CD14-positive monocyte (primary cell): ENCODE measurements at regions of chr9 and their contacts with region 1.

Region 1: DNA sequence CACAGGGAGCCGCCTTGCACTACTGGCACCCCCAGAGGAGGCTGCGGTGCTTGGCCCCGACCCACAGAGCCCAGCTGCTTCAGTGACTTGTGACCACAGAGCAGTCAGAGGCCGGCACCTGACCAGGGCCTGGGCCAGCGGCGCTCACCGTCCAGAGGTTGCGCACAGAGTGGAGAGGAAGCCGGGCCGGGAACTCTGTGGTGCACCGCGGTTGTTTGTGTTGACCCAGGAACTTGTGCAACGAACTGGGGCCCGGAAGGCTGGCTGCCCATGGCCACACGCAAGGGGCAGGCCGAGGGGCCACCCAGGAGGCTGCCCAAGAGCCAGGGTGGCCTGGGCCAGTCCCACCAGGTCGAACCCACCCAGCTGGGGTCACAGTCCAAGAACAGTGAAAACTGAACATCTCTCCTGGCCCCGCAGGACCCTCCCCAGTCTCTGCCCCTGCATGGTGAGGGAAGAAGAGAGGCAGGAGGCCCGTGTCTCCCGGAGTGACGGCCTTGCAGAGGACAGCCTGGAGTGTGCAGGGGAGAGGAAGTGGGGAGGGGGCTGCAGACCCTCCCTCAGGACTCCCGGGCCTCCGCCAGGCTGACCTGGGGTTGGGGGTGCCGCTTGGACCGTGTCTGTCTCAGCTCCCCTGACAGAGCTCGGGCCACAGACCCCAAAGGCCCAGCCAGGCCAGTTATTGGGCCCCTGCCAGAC is 42.8 kb upstream of the EGFL7 start:
- DNase-seq: peak; percentile 96 to 98 (median 96)
- H3K4me3 ChIP-seq: peak overlapping the region in 1 of 3 experiments; percentile 53
- H3K4me3 Mint-ChIP-seq: peak overlapping the region; percentile 58 to 67
- H3K27ac ChIP-seq: peak overlapping the region; percentile 97 to 99
- H3K27ac Mint-ChIP-seq: peak overlapping the region; percentile 88 to 96 (median 92)
- H3K4me1 ChIP-seq: peaks cover 73 to 85% of the 10 kb centered on the region in 2 donors
- H3K4me1 Mint-ChIP-seq: peaks cover 50% of the 10 kb centered on the region
- H3K27me3 ChIP-seq: peaks cover 0 to 2% of the 10 kb centered on the region in 2 donors
- H3K27me3 Mint-ChIP-seq: peaks cover 4 to 17% (median 6%) of the 10 kb centered on the region in 3 donors
- CTCF ChIP-seq: no peak

Region 2: GRCh38 chr9:136545966-136546698 is 73.8 kb before region 1 on chr9 and contains the start of gene NOTCH1:
- intact Hi-C with region 1: loop called in 1 of 2 experiments (anchors 5 kb)
- DNase-seq: peak; percentile 95 to 98 (median 97)
- H3K4me3 ChIP-seq: peak within 1 kb of the TSS; percentile 87 to 99 (median 93)
- H3K4me3 Mint-ChIP-seq: peak within 1 kb of the TSS; percentile 89 to 94
- H3K27ac ChIP-seq: peak within 1 kb of the TSS; percentile 84 to 92
- H3K27ac Mint-ChIP-seq: peak within 1 kb of the TSS; percentile 82 to 92 (median 90)
- H3K4me1 ChIP-seq: peaks cover 64 to 79% of the 10 kb centered on the region in 2 donors
- H3K4me1 Mint-ChIP-seq: peaks cover 51% of the 10 kb centered on the region
- H3K27me3 ChIP-seq: no peaks in the 10 kb centered on the region
- H3K27me3 Mint-ChIP-seq: peaks cover 2 to 11% (median 2%) of the 10 kb centered on the region in 3 donors
- CTCF ChIP-seq: no peak
- polyA plus RNA-seq, gene NOTCH1: 1.4 to 33.0 (median 2.2) TPM

Region 3: DNA sequence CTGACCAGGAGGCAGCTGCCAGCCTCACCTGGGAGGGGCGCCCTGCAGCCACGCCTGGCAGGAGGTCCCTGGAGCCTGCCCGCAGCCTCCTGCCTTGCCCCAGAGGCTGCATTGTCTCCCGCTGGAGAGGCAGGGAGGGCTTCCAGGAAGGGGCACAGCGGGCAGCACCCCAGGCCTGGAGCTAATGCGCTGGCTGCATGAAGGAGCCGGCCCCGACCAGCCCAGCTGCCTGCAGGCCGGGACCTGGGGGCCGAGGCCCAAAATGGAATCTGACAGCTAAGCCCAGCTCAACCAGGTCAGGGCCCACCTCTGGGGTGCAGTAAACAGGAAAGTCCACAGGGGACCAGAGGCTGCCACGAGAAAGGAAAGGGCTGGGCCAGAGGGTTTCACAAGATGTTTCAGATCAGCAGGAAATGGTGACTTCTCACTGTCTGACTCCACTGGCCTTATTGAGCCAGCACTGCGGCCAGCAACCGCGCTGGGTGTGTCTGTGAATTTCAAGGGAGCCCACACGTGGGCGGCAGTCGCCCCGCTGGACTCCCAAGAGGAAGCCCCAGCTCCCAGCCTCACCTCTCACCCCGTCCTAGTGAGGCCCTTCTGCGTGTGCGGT is 55.4 kb before region 1 on chr9:
- intact Hi-C with region 1: loop called (anchors 5 to 10 kb)
- DNase-seq: peak; percentile 95 to 99 (median 97)
- H3K4me3 ChIP-seq: peak overlapping the region in 1 of 3 experiments; percentile 50
- H3K4me3 Mint-ChIP-seq: peak overlapping the region in 1 of 2 donors; percentile 30
- H3K27ac ChIP-seq: peak overlapping the region; percentile 83 to 91
- H3K27ac Mint-ChIP-seq: peak overlapping the region; percentile 81 to 93 (median 89)
- H3K4me1 ChIP-seq: peaks cover 62 to 68% of the 10 kb centered on the region in 2 donors
- H3K4me1 Mint-ChIP-seq: peaks cover 53% of the 10 kb centered on the region
- H3K27me3 ChIP-seq: no peaks in the 10 kb centered on the region
- H3K27me3 Mint-ChIP-seq: peaks cover 0 to 2% (median 0%) of the 10 kb centered on the region in 3 donors
- CTCF ChIP-seq: peak; percentile 70

Region 4: GRCh38 chr9:136599811-136600660 is 19.9 kb before region 1 on chr9:
- intact Hi-C with region 1: no loop called
- DNase-seq: no peak
- H3K4me3 ChIP-seq: no peak overlapping the region
- H3K4me3 Mint-ChIP-seq: no peak overlapping the region
- H3K27ac ChIP-seq: no peak overlapping the region
- H3K27ac Mint-ChIP-seq: no peak overlapping the region
- H3K4me1 ChIP-seq: peaks cover 24 to 30% of the 10 kb centered on the region in 2 donors
- H3K4me1 Mint-ChIP-seq: peaks cover 22% of the 10 kb centered on the region
- H3K27me3 ChIP-seq: peaks cover 0 to 10% of the 10 kb centered on the region in 2 donors
- H3K27me3 Mint-ChIP-seq: peaks cover 2 to 39% (median 15%) of the 10 kb centered on the region in 3 donors
- CTCF ChIP-seq: no peak